ENCODE measurements at regions of chr17 and their contacts with region 1.

Region 1: DNA sequence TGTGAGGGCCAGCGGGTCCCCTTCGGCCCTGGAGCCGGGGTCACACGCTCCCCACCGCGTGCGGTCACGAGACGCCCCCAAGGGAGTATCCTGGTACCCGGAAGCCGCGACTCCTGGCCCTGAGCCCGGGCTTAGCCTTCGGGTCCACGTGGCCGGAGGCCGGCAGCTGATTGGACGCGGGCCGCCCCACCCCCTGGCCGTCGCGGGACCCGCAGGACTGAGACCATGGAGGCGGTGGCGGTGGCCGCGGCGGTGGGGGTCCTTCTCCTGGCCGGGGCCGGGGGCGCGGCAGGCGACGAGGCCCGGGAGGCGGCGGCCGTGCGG is at the start of gene NAGLU:
- DNase-seq: peak; percentile 96
- H3K4me3 ChIP-seq: peak within 1 kb of the TSS; percentile 79
- H3K27ac ChIP-seq: peak within 1 kb of the TSS; percentile 60
- H3K4me1 ChIP-seq: peaks cover 25% of the 10 kb centered on the region
- CTCF ChIP-seq: no peak
- total RNA-seq, gene NAGLU: 25.3 and 37.6 TPM in 2 replicates

Region 2: DNA sequence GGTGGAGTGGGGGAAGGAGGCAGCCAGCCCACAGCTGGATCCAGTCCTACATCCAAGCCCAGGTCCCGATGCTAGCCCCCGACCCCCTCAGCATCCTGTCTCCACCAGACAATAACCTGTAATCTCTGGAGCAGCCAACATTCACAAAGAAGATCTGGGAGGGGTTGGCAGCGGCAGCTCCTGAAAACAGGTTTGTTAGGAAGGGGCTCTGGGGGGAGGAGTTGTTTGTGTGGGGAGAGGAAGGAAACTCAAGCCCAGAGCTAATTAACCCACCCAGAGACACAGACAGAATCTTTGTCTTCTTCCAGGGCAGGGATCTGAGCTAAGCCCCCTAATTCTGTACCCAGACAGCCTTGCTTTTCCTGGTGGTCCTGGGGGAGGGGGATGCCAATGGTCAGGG is 481.0 kb before region 1 on chr17:
- CTCF ChIA-PET with region 1: interaction called, 11 read pairs
- POLR2A ChIA-PET with region 1: no interaction called
- intact Hi-C with region 1: no loop called
- DNase-seq: no peak
- H3K4me3 ChIP-seq: no peak overlapping the region
- H3K27ac ChIP-seq: no peak overlapping the region
- H3K4me1 ChIP-seq: peaks cover 4% of the 10 kb centered on the region
- CTCF ChIP-seq: no peak

Region 3: DNA sequence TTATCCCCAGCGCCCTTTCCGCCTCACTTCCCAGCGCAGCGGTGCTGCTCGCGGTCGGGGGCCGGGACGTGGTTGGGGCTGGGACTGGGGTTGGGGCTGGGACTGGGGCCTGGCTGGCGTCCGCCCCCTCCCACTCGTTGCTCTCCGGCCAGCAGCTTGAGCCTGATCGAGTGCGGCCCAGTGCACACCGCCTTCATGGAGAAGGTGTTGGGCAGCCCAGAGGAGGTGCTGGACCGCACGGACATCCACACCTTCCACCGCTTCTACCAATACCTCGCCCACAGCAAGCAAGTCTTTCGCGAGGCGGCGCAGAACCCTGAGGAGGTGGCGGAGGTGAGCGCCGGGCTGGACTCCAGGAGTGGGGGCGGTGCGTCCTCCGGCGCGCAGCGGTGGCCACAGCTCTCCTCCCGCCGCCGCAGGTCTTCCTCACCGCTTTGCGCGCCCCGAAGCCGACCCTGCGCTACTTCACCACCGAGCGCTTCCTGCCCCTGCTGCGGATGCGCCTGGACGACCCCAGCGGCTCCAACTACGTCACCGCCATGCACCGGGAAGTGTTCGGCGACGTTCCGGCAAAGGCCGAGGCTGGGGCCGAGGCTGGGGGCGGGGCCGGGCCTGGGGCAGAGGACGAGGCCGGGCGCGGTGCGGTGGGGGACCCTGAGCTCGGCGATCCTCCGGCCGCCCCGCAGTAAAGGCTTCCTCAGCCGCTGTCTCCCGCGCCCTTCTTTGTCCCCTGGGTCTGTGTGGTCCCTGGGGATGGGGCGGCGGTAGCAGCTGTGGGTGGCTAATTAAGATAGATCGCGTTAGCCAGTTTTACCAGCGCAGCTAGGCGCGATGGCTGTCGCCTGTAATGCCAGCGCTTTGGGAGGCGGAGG is 18.5 kb after region 1 on chr17:
- CTCF ChIA-PET with region 1: no interaction called
- POLR2A ChIA-PET with region 1: no interaction called
- intact Hi-C with region 1: no loop called
- DNase-seq: peak; percentile 93
- H3K4me3 ChIP-seq: peak overlapping the region; percentile 87
- H3K27ac ChIP-seq: peak overlapping the region; percentile 64
- H3K4me1 ChIP-seq: peaks cover 26% of the 10 kb centered on the region
- CTCF ChIP-seq: no peak